MCF 10A (cell line): ENCODE measurements at regions of chr2 and their contacts with region 1.

Region 1: DNA sequence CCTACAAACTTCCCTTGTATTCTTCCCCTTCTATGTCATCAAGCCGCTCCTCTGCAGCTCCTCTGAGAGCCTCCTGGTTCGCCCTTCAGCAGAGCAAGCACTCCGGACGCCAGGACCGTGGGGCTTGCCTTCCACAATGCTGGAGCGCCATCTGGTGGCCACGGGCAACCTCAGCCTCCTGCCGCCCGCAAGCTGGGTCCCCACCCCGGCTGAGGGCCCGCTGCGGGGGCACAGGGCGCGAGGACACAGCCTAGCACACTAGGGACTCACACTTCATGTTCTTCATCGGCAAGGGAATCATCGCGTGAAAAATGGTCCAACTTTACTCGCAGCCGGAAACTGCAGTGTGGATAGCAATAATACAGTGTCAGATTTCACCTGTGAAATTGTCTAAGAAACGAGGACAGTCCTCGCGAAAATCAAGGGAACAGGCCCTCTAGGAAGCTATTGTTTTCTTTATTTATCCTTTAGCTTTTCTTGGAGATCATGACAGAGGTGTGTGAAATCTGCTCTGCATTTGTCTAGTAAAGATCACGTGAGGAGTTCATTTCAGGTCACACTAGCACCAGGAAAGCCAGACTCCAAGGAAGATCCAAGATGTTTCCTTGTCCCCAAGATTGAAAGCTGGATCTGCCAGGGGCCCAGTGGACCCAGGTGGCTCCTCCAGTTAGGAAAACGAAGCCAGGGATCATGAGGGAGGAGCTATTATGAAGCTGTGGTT is 5.8 kb downstream of the PRLH start:
- DNase-seq: peak; percentile 82
- H3K4me3 Mint-ChIP-seq: peak overlapping the region; percentile 35
- H3K27ac Mint-ChIP-seq: peak overlapping the region; percentile 16
- H3K4me1 Mint-ChIP-seq: peaks cover 17% of the 10 kb centered on the region
- H3K27me3 Mint-ChIP-seq: no peaks in the 10 kb centered on the region
- CTCF ChIP-seq: peak; percentile 97

Region 2: DNA sequence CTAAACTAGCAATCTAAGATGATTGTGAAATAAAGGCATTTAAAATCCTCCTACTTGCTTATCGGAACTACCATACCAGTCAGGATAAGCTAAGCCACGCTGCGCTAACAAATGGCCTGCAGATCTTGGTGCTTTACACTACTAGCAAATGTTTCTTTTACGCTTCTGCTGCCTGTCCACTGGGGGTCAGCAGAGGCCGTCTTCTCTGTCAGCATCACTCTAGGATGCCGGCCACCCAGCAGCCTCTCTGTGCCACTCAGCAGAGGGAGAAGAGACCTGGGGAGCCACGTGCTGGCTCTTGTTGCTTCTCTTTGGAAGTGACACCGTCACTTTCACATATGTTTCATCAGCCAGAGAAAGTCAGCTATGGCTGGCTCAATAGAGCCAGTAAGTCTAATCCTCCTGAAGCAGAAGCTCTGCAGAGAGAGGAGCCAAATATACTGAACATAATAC is 449.9 kb before region 1 on chr2:
- CTCF ChIA-PET with region 1: interaction called, 22 read pairs
- POLR2A ChIA-PET with region 1: no interaction called
- intact Hi-C with region 1: loop called (anchors 1 kb)
- DNase-seq: peak; percentile 82
- H3K4me3 Mint-ChIP-seq: no peak overlapping the region
- H3K27ac Mint-ChIP-seq: peak overlapping the region; percentile 82
- H3K4me1 Mint-ChIP-seq: peaks cover 25% of the 10 kb centered on the region
- H3K27me3 Mint-ChIP-seq: no peaks in the 10 kb centered on the region
- CTCF ChIP-seq: peak; percentile 80

Region 3: DNA sequence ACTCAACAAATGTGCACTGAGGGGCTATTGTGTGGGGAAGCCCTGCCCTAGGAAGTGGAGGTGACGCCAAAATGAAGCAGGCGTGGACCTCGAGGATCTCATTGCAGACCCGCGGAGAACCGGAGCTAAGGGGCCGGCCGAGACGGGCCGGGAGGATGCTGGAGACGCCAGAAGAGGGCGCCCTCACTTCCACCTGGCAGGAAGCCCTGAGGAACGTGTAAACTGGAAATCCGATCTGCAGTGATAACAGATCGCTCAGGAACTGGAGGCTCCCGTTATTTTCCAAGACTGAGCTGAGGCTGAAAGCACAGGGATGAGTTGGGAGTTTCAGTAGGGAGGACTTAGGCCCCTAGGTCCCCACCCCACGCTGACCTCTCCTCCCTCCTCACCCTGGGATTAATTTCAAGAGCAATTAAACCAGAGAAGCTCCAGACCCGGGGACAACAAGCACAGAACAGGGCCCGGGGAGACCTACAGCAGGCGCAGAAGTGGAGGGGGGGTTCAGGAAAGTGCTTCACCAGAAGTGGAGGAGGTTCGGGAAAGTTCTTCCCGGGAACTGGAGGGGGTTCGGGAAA is 150.6 kb before region 1 on chr2:
- CTCF ChIA-PET with region 1: interaction called, 13 read pairs
- POLR2A ChIA-PET with region 1: interaction called, 6 read pairs
- intact Hi-C with region 1: no loop called
- DNase-seq: peak; percentile 84
- H3K4me3 Mint-ChIP-seq: peak overlapping the region; percentile 35
- H3K27ac Mint-ChIP-seq: peak overlapping the region; percentile 13
- H3K4me1 Mint-ChIP-seq: peaks cover 19% of the 10 kb centered on the region
- H3K27me3 Mint-ChIP-seq: no peaks in the 10 kb centered on the region
- CTCF ChIP-seq: peak; percentile 76

Region 4: GRCh38 chr2:237512774-237513466 is 59.3 kb before region 1 on chr2:
- CTCF ChIA-PET with region 1: interaction called, 239 read pairs
- POLR2A ChIA-PET with region 1: interaction called, 25 read pairs
- intact Hi-C with region 1: loop called (anchors 1 kb)
- DNase-seq: peak; percentile 90
- H3K4me3 Mint-ChIP-seq: no peak overlapping the region
- H3K27ac Mint-ChIP-seq: no peak overlapping the region
- H3K4me1 Mint-ChIP-seq: no peaks in the 10 kb centered on the region
- H3K27me3 Mint-ChIP-seq: no peaks in the 10 kb centered on the region
- CTCF ChIP-seq: peak; percentile 86

Region 5: DNA sequence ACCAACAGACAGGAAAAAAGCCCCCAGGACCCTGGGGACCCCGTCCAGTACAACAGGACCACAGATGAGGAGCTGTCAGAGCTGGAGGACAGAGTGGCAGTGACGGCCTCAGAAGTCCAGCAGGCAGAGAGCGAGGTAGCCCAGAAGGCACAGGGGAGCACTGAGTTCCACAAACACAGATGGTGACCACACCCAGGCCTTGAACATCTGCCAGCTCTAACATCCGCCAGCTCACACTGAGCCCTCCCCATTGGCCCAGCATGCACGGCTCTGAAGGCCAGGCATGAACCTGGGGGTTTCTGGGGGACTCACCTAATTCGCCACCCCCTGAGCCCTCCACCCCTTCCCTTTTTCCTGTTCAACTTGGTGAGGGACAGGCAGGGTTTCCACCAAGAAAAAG is 31.4 kb before region 1 on chr2:
- CTCF ChIA-PET with region 1: interaction called, 17 read pairs
- POLR2A ChIA-PET with region 1: no interaction called
- intact Hi-C with region 1: no loop called
- DNase-seq: peak; percentile 71
- H3K4me3 Mint-ChIP-seq: no peak overlapping the region
- H3K27ac Mint-ChIP-seq: no peak overlapping the region
- H3K4me1 Mint-ChIP-seq: peaks cover 10% of the 10 kb centered on the region
- H3K27me3 Mint-ChIP-seq: no peaks in the 10 kb centered on the region
- CTCF ChIP-seq: no peak

Region 6: DNA sequence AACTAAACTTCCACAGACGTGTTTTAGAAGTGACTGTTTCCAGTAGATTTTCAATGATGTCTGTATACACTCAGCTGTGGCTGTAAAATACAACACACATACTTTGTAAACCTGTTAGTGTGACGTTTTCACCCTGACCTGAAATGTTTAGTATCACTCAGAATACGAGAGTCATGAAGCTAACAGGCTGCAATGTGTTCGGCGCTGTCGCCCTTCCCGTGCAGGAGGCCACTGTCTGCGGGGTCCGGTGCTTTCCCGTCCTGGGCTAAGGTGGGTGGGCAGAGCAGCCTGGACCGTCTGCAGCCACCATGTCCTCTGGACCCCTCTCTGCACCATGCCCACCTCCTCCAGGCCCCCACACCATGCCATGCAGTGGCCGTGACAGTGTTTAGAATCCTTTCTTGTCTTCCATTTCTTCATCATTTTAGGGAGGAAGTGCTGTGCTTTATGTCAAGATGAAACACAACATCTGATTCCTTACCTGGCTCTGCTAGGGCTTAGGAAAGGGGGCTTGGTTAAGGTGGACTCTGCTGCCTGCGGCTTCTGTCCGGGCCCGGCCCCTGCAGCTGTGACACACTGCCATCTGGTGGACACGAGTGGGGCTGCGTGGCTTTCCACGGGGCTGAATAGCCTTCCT is 172.6 kb after region 1 on chr2:
- CTCF ChIA-PET with region 1: interaction called, 12 read pairs
- POLR2A ChIA-PET with region 1: no interaction called
- intact Hi-C with region 1: no loop called
- DNase-seq: peak; percentile 55
- H3K4me3 Mint-ChIP-seq: no peak overlapping the region
- H3K27ac Mint-ChIP-seq: peak overlapping the region; percentile 33
- H3K4me1 Mint-ChIP-seq: peaks cover 19% of the 10 kb centered on the region
- H3K27me3 Mint-ChIP-seq: no peaks in the 10 kb centered on the region
- CTCF ChIP-seq: peak; percentile 92